ENCODE measurements at regions of chr9 and their contacts with region 1.

Region 1: GRCh38 chr9:95201206-95201605 is 116.3 kb downstream of the FANCC start:
- DNase-seq: no peak
- H3K4me3 ChIP-seq: no peak overlapping the region
- H3K27ac ChIP-seq: no peak overlapping the region
- H3K4me1 ChIP-seq: peaks cover 0 to 5% (median 2%) of the 10 kb centered on the region in 4 experiments; a peak in 2 of 7 replicates
- H3K27me3 ChIP-seq: no peaks in the 10 kb centered on the region
- CTCF ChIP-seq: no peak
- EP300 ChIP-seq: no peak
- POLR2A ChIP-seq: no peak
- RAD21 ChIP-seq: no peak

Region 2: DNA sequence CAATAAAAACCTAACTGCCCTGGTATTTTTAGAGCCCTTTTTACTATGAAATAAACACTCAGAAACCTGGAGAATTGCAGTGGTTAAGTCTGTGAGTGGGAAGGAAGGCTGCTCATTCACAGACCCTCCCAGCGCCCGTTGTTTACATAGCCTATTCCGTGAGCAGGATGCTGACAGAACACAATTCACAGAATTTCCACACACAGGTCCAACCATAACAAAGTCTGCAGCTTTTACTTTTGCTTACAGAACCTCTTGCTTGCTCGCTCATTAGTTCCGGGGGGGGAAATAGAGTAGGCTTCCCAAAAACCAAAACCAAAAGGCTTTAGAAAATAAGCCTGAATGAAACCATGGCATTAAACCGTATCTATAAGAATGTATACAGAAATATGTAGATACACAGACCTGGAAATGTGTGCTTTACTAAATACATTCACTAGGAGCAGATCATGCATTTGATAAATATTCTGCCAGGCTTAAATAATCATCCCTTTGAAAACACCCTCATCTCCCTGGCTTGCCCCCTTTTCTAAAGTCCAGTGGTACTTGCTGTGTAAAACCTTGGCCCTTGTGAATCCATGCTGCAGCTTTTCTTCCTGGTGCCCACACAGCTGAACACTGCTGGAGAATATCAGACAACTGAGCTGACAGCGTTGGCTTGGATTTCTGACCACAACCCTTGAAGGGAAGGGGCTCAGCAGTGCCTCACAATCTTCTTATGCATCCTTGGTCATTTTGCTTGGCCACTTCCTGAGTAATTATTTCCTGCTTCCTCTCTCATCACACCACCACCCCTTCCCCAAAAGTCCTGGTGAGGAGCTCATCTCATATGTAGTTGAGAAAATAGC is 11.7 kb before region 1 on chr9:
- CTCF ChIA-PET with region 1: interaction called, 28 read pairs
- POLR2A ChIA-PET with region 1: interaction called, 4 read pairs
- DNase-seq: no peak
- H3K4me3 ChIP-seq: no peak overlapping the region
- H3K27ac ChIP-seq: no peak overlapping the region
- H3K4me1 ChIP-seq: no peaks in the 10 kb centered on the region; a peak in 1 of 7 replicates
- H3K27me3 ChIP-seq: no peaks in the 10 kb centered on the region
- CTCF ChIP-seq: no peak
- EP300 ChIP-seq: no peak
- POLR2A ChIP-seq: no peak
- RAD21 ChIP-seq: no peak